ENCODE measurements at regions of chr10 and their contacts with region 1.

Region 1: GRCh38 chr10:102503281-102504220 is at the start of gene SUFU:
- DNase-seq: peak; percentile 94 to 100 (median 98)
- ATAC-seq: peak; percentile 67
- H3K4me3 ChIP-seq: peak within 1 kb of the TSS; percentile 100
- H3K4me3 Mint-ChIP-seq: no peak within 1 kb of the TSS
- H3K27ac ChIP-seq: peak within 1 kb of the TSS; percentile 80 to 97
- H3K27ac Mint-ChIP-seq: no peak within 1 kb of the TSS
- H3K4me1 ChIP-seq: peaks cover 44% of the 10 kb centered on the region
- H3K4me1 Mint-ChIP-seq: peaks cover 46% of the 10 kb centered on the region
- H3K27me3 ChIP-seq: no peaks in the 10 kb centered on the region
- H3K27me3 Mint-ChIP-seq: no peaks in the 10 kb centered on the region
- CTCF ChIP-seq: peak; percentile 88
- total RNA-seq, gene SUFU: 6.7 to 7.3 TPM

Region 2: GRCh38 chr10:102151774-102152544 is 351.6 kb before region 1 on chr10 and contains the start of gene NOLC1:
- CTCF ChIA-PET with region 1: no interaction called
- POLR2A ChIA-PET with region 1: interaction called, 5 read pairs
- intact Hi-C with region 1: loop called (anchors 2 to 5 kb)
- DNase-seq: peak; percentile 98 to 100 (median 100)
- ATAC-seq: peak; percentile 93
- H3K4me3 ChIP-seq: peak within 1 kb of the TSS; percentile 80
- H3K4me3 Mint-ChIP-seq: peak within 1 kb of the TSS; percentile 91
- H3K27ac ChIP-seq: peak within 1 kb of the TSS; percentile 89 to 93
- H3K27ac Mint-ChIP-seq: peak within 1 kb of the TSS; percentile 90
- H3K4me1 ChIP-seq: peaks cover 42% of the 10 kb centered on the region
- H3K4me1 Mint-ChIP-seq: peaks cover 50% of the 10 kb centered on the region
- H3K27me3 ChIP-seq: no peaks in the 10 kb centered on the region
- H3K27me3 Mint-ChIP-seq: no peaks in the 10 kb centered on the region
- CTCF ChIP-seq: no peak
- total RNA-seq, gene NOLC1: 34.2 to 36.1 TPM

Region 3: GRCh38 chr10:102310361-102311024 is 193.1 kb before region 1 on chr10:
- CTCF ChIA-PET with region 1: no interaction called
- POLR2A ChIA-PET with region 1: no interaction called
- intact Hi-C with region 1: no loop called
- DNase-seq: no peak
- ATAC-seq: no peak
- H3K4me3 ChIP-seq: no peak overlapping the region
- H3K4me3 Mint-ChIP-seq: no peak overlapping the region
- H3K27ac ChIP-seq: no peak overlapping the region
- H3K27ac Mint-ChIP-seq: no peak overlapping the region
- H3K4me1 ChIP-seq: peaks cover 5% of the 10 kb centered on the region
- H3K4me1 Mint-ChIP-seq: peaks cover 32% of the 10 kb centered on the region
- H3K27me3 ChIP-seq: no peaks in the 10 kb centered on the region
- H3K27me3 Mint-ChIP-seq: no peaks in the 10 kb centered on the region
- CTCF ChIP-seq: no peak

Region 4: GRCh38 chr10:102420810-102421644 is 82.5 kb before region 1 on chr10 and contains the start of gene FBXL15:
- CTCF ChIA-PET with region 1: interaction called, 4 read pairs
- POLR2A ChIA-PET with region 1: interaction called, 16 read pairs
- intact Hi-C with region 1: loop called in 1 of 2 experiments (anchors 5 kb)
- DNase-seq: peak; percentile 85 to 97 (median 94)
- ATAC-seq: peak; percentile 76
- H3K4me3 ChIP-seq: peak within 1 kb of the TSS; percentile 83
- H3K4me3 Mint-ChIP-seq: peak within 1 kb of the TSS; percentile 99
- H3K27ac ChIP-seq: peak within 1 kb of the TSS; percentile 65 to 82
- H3K27ac Mint-ChIP-seq: peak within 1 kb of the TSS; percentile 97
- H3K4me1 ChIP-seq: peaks cover 47% of the 10 kb centered on the region
- H3K4me1 Mint-ChIP-seq: peaks cover 34% of the 10 kb centered on the region
- H3K27me3 ChIP-seq: peaks cover 16 to 22% of the 10 kb centered on the region in 2 experiments
- H3K27me3 Mint-ChIP-seq: peaks cover 24% of the 10 kb centered on the region
- CTCF ChIP-seq: no peak
- total RNA-seq, gene FBXL15: 10.2 to 10.4 TPM

Region 5: GRCh38 chr10:102461187-102462054 is 42.1 kb before region 1 on chr10:
- CTCF ChIA-PET with region 1: interaction called, 3 read pairs
- POLR2A ChIA-PET with region 1: interaction called, 9 read pairs
- intact Hi-C with region 1: loop called in 1 of 2 experiments (anchors 1 kb)
- DNase-seq: peak; percentile 87 to 97 (median 93)
- ATAC-seq: peak; percentile 100
- H3K4me3 ChIP-seq: peak overlapping the region; percentile 72
- H3K4me3 Mint-ChIP-seq: peak overlapping the region; percentile 92
- H3K27ac ChIP-seq: peak overlapping the region in 1 of 2 donors; percentile 38
- H3K27ac Mint-ChIP-seq: peak overlapping the region; percentile 70
- H3K4me1 ChIP-seq: peaks cover 28% of the 10 kb centered on the region
- H3K4me1 Mint-ChIP-seq: peaks cover 29% of the 10 kb centered on the region
- H3K27me3 ChIP-seq: no peaks in the 10 kb centered on the region
- H3K27me3 Mint-ChIP-seq: no peaks in the 10 kb centered on the region
- CTCF ChIP-seq: no peak

Region 6: GRCh38 chr10:102678842-102679289 is 175.3 kb after region 1 on chr10:
- CTCF ChIA-PET with region 1: no interaction called
- POLR2A ChIA-PET with region 1: interaction called, 7 read pairs
- intact Hi-C with region 1: loop called in 1 of 2 experiments (anchors 1 kb)
- DNase-seq: peak in 3 of 14 experiments; percentile 28 to 49 (median 41)
- ATAC-seq: no peak
- H3K4me3 ChIP-seq: no peak overlapping the region
- H3K4me3 Mint-ChIP-seq: peak overlapping the region; percentile 30
- H3K27ac ChIP-seq: no peak overlapping the region
- H3K27ac Mint-ChIP-seq: peak overlapping the region; percentile 49
- H3K4me1 ChIP-seq: peaks cover 55% of the 10 kb centered on the region
- H3K4me1 Mint-ChIP-seq: peaks cover 67% of the 10 kb centered on the region
- H3K27me3 ChIP-seq: no peaks in the 10 kb centered on the region
- H3K27me3 Mint-ChIP-seq: no peaks in the 10 kb centered on the region
- CTCF ChIP-seq: no peak

Region 7: DNA sequence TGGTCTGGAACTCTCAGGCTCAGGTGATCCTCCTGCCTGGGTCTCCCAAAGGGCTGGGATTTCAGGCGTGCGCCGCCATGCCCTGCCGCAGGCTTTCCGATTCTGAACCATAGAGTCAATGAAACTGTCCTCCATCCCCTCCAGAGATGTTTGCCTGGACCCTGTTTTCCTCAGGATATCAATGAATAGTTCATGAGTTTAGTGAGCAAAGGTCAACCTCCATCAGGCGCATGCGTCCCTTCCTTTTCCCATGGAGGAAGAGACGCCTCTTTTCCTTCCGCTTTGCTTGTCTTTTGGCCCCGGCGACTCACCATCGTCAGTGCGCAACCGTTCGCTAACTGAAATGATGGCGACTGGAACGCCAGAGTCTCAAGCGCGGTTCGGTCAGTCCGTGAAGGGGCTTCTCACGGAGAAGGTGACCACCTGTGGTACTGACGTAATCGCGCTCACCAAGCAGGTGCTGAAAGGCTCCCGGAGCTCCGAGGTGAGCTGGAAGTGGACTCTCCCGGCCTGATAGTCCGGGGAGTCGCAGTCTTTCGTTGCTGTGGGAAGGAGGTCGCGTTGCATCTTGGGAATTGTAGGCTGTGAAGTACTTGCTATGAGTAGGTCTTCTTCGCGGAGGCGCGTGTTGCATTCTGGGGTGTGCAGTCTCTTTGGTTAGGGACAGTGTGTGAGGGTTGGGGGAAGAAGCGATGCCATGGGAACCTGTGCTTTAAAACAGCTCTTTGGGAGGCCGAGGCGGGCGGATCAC is 350.6 kb after region 1 on chr10 and contains the start of gene BORCS7:
- CTCF ChIA-PET with region 1: no interaction called
- POLR2A ChIA-PET with region 1: no interaction called
- intact Hi-C with region 1: loop called in 1 of 2 experiments (anchors 5 kb)
- DNase-seq: peak; percentile 70 to 94 (median 78)
- ATAC-seq: peak; percentile 99
- H3K4me3 ChIP-seq: peak within 1 kb of the TSS; percentile 98
- H3K4me3 Mint-ChIP-seq: peak within 1 kb of the TSS; percentile 85
- H3K27ac ChIP-seq: peak within 1 kb of the TSS; percentile 87 to 97
- H3K27ac Mint-ChIP-seq: peak within 1 kb of the TSS; percentile 96
- H3K4me1 ChIP-seq: peaks cover 15% of the 10 kb centered on the region
- H3K4me1 Mint-ChIP-seq: peaks cover 16% of the 10 kb centered on the region
- H3K27me3 ChIP-seq: no peaks in the 10 kb centered on the region
- H3K27me3 Mint-ChIP-seq: no peaks in the 10 kb centered on the region
- CTCF ChIP-seq: no peak
- total RNA-seq, gene BORCS7: 10.6 to 11.6 TPM